ENCODE measurements at regions of chr2 and their contacts with region 1.

Region 1: GRCh38 chr2:113248997-113249770 is 29.5 kb downstream of the PAX8 start:
- DNase-seq: peak; percentile 51 to 88 (median 68)
- ATAC-seq: peak; percentile 54
- H3K4me3 ChIP-seq: no peak overlapping the region
- H3K4me3 Mint-ChIP-seq: peak overlapping the region; percentile 17
- H3K27ac ChIP-seq: no peak overlapping the region
- H3K27ac Mint-ChIP-seq: peak overlapping the region; percentile 80
- H3K4me1 ChIP-seq: peaks cover 40% of the 10 kb centered on the region
- H3K4me1 Mint-ChIP-seq: peaks cover 53% of the 10 kb centered on the region
- H3K27me3 ChIP-seq: no peaks in the 10 kb centered on the region
- H3K27me3 Mint-ChIP-seq: no peaks in the 10 kb centered on the region
- CTCF ChIP-seq: peak; percentile 96

Region 2: DNA sequence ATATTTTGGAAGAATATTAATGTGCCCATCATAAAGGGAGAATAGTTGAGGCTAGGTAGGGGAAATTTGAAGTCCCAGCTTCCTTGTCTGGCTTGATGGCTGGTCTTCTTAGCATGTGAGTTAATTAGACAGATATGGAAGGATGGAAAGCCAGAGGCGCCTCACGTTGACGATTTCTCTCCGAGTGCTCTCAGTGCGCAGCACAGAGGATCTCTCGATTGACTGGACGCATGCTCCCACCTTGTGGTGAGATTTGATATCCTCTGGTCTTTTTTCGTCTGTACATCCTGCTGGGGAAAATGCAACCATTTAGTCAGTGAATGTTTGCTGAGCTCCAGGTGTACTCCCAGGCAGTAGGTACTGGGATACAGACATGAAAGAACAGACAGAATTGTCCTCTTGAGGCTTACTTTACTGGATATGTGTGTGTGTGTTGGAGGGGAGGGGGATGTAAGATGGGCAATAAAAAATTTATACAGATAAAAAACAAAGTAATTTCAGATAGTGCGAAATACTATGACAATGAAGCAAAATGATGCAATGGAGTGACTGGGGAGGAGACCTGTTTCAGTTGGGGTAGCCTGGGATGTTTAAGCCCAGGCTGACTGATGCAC is 121.4 kb after region 1 on chr2:
- CTCF ChIA-PET with region 1: interaction called, 6 read pairs
- POLR2A ChIA-PET with region 1: no interaction called
- intact Hi-C with region 1: loop called (anchors 1 kb)
- DNase-seq: peak; percentile 49 to 85 (median 58)
- ATAC-seq: peak; percentile 100
- H3K4me3 ChIP-seq: no peak overlapping the region
- H3K4me3 Mint-ChIP-seq: no peak overlapping the region
- H3K27ac ChIP-seq: no peak overlapping the region
- H3K27ac Mint-ChIP-seq: no peak overlapping the region
- H3K4me1 ChIP-seq: no peaks in the 10 kb centered on the region
- H3K4me1 Mint-ChIP-seq: peaks cover 5% of the 10 kb centered on the region
- H3K27me3 ChIP-seq: no peaks in the 10 kb centered on the region
- H3K27me3 Mint-ChIP-seq: no peaks in the 10 kb centered on the region
- CTCF ChIP-seq: peak; percentile 65

Region 3: DNA sequence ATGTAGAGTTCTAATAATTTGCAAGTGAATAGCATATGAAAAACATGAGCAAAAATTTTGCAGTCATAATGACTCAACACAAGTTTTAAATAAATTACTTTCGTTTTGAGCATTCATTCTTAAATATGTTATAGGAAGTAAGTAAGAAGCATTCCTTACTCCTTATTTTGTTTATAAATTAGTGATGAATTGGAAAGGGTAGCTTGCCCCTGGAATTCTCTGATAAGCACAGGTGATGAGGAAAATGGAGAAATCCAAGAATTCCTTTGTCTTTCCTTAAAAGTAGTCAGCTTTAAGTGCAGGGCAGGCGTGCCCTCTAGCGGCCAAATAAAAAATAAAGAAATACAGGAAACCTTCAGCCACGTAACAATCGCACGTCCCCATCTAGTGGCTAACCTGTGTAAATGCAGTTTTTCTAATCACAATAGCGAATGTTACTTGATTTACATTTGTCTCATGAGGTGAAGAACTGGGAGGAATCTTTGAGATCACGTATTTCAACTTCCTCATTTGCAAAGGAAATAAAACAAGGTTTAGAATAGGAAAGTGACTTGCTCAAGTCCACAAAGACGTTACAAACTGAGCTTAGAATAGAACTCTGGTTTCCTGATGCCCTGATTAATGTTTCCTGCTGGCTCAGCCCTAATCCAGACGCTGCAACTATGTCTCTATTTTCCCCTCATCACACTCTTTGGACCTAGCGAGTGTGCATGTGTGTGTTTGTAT is 141.1 kb after region 1 on chr2:
- CTCF ChIA-PET with region 1: interaction called, 20 read pairs
- POLR2A ChIA-PET with region 1: interaction called, 5 read pairs
- intact Hi-C with region 1: loop called (anchors 5 kb)
- DNase-seq: peak; percentile 11 to 88 (median 43)
- ATAC-seq: peak; percentile 97
- H3K4me3 ChIP-seq: peak overlapping the region; percentile 51
- H3K4me3 Mint-ChIP-seq: peak overlapping the region; percentile 83
- H3K27ac ChIP-seq: no peak overlapping the region
- H3K27ac Mint-ChIP-seq: peak overlapping the region; percentile 68
- H3K4me1 ChIP-seq: peaks cover 4% of the 10 kb centered on the region
- H3K4me1 Mint-ChIP-seq: peaks cover 10% of the 10 kb centered on the region
- H3K27me3 ChIP-seq: no peaks in the 10 kb centered on the region
- H3K27me3 Mint-ChIP-seq: no peaks in the 10 kb centered on the region
- CTCF ChIP-seq: peak; percentile 100

Measured in CD4-positive, alpha-beta T cell (primary cell).